ENCODE measurements at regions of chr19 and their contacts with region 1.

Region 1: DNA sequence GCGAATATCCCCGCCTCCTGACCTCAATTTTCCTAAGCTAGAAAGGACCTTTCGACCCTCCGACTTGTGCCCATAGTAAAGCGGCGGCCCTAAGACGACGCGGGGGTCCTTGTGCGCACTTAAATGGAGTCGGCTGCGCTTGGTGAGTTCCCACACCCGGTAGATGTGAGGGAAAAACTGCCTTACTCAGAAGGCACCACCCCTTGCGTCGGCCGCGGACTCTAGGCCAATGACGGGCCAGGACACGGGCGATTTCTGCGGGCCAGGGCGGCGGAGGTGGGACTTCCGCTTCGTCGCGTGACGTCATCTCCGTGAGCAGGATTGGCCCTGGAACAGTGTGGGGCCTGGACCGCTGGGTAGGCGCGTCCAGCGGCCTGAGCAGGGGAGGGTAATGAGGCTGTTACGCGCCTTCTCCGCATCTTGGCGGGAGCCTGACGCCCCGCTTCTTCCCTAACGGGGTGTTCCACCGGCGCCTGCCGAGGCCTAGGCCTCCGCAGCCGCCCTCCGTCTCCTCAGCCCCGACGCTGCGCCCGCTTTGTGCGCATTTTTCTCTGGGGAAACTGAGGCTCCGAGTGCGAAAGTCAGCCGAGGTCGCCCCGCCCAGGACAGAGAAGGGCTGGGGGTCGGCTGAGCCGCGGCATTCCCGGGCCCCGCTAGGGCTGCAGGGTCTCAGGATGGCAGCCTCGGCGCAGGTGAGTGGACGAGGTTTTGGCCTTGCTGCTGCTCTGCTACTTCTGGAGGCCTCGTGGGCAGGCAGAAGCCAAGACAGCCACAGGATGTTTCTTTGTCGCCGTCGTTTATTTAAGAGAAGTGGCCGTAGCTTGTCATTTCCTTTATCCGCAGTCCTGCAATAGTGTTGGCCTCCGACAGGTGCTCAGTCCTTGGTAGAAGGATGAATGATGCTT is at the start of gene ZNF543:
- DNase-seq: peak; percentile 95
- H3K4me3 Mint-ChIP-seq: peak within 1 kb of the TSS; percentile 84
- H3K27ac Mint-ChIP-seq: peak within 1 kb of the TSS; percentile 84
- H3K4me1 Mint-ChIP-seq: peaks cover 21% of the 10 kb centered on the region
- H3K27me3 Mint-ChIP-seq: peaks cover 27% of the 10 kb centered on the region
- total RNA-seq, gene ZNF543: 3.2 to 3.5 TPM

Region 2: GRCh38 chr19:57240311-57241090 is 79.9 kb before region 1 on chr19 and contains the start of gene ZNF805:
- CTCF ChIA-PET with region 1: no interaction called
- intact Hi-C with region 1: loop called (anchors 1 kb)
- DNase-seq: peak; percentile 95
- H3K4me3 Mint-ChIP-seq: peak within 1 kb of the TSS; percentile 74
- H3K27ac Mint-ChIP-seq: peak within 1 kb of the TSS; percentile 70
- H3K4me1 Mint-ChIP-seq: peaks cover 22% of the 10 kb centered on the region
- H3K27me3 Mint-ChIP-seq: no peaks in the 10 kb centered on the region
- total RNA-seq, gene ZNF805: 6.0 to 6.5 TPM

Region 3: GRCh38 chr19:57302020-57302465 is 18.4 kb before region 1 on chr19:
- CTCF ChIA-PET with region 1: no interaction called
- intact Hi-C with region 1: no loop called
- DNase-seq: no peak
- H3K4me3 Mint-ChIP-seq: no peak overlapping the region
- H3K27ac Mint-ChIP-seq: no peak overlapping the region
- H3K4me1 Mint-ChIP-seq: no peaks in the 10 kb centered on the region
- H3K27me3 Mint-ChIP-seq: no peaks in the 10 kb centered on the region

Region 4: GRCh38 chr19:57947208-57948134 is 627.0 kb after region 1 on chr19 and contains the start of gene ZNF256:
- CTCF ChIA-PET with region 1: no interaction called
- intact Hi-C with region 1: no loop called
- DNase-seq: peak; percentile 93
- H3K4me3 Mint-ChIP-seq: peak within 1 kb of the TSS; percentile 91
- H3K27ac Mint-ChIP-seq: peak within 1 kb of the TSS; percentile 87
- H3K4me1 Mint-ChIP-seq: peaks cover 17% of the 10 kb centered on the region
- H3K27me3 Mint-ChIP-seq: no peaks in the 10 kb centered on the region
- total RNA-seq, gene ZNF256: 4.4 to 4.7 TPM

Measured in activated naive CD4-positive, alpha-beta T cell treated with anti-CD3 and anti-CD28 coated beads for 36 hours (primary cell).